ENCODE measurements at regions of chr10 and their contacts with region 1.

Region 1: DNA sequence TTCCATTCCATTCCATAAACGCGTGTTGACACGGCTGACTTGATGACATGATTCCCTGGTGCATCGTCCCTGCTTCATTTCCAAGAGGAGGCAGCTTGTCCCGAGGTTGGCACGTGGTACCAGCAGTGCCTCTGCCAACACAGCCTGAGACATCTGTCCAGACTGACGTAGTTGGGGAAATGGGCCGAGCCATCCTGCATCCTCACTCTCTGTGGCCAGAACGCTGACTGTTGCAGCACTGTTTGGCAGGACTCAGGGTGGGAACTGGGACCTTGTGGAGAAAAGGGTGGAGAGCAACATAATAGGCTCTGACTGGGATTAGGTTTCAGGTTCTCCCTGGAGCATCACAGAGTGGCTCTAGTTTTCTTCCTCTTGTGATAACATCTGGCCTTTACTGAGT is 118.6 kb upstream of the BTBD16 start:
- DNase-seq: peak; percentile 97 to 99
- ATAC-seq: peak; percentile 87 to 90
- H3K4me3 ChIP-seq: no peak overlapping the region
- H3K27ac ChIP-seq: peak overlapping the region; percentile 84 to 98 (median 96)
- H3K4me1 ChIP-seq: peaks cover 66 to 81% of the 10 kb centered on the region in 2 donors
- H3K27me3 ChIP-seq: no peaks in the 10 kb centered on the region
- CTCF ChIP-seq: peak in 1 of 5 experiments; percentile 24
- POLR2A ChIP-seq: peak; percentile 9 to 62

Region 2: GRCh38 chr10:122199070-122199469 is 46.5 kb after region 1 on chr10:
- in situ Hi-C with region 1: no loop called
- intact Hi-C with region 1: loop called (anchors 2 kb)
- DNase-seq: peak; percentile 66 to 73
- ATAC-seq: peak; percentile 87 to 89
- H3K4me3 ChIP-seq: no peak overlapping the region
- H3K27ac ChIP-seq: peak overlapping the region; percentile 75 to 95 (median 82)
- H3K4me1 ChIP-seq: peaks cover 19 to 23% of the 10 kb centered on the region in 2 donors
- H3K27me3 ChIP-seq: no peaks in the 10 kb centered on the region
- CTCF ChIP-seq: no peak
- POLR2A ChIP-seq: no peak

Region 3: GRCh38 chr10:122232769-122233168 is 80.2 kb after region 1 on chr10:
- in situ Hi-C with region 1: no loop called
- intact Hi-C with region 1: loop called (anchors 2 kb)
- DNase-seq: no peak
- ATAC-seq: peak in 1 of 2 donors; percentile 21
- H3K4me3 ChIP-seq: no peak overlapping the region
- H3K27ac ChIP-seq: peak overlapping the region; percentile 83 to 95 (median 86)
- H3K4me1 ChIP-seq: peaks cover 34% of the 10 kb centered on the region in 2 donors
- H3K27me3 ChIP-seq: no peaks in the 10 kb centered on the region
- CTCF ChIP-seq: no peak
- POLR2A ChIP-seq: no peak

Region 4: GRCh38 chr10:122515588-122516231 is 363.2 kb after region 1 on chr10:
- in situ Hi-C with region 1: no loop called
- intact Hi-C with region 1: no loop called
- DNase-seq: peak in 1 of 2 donors; percentile 19
- ATAC-seq: peak; percentile 23 to 29
- H3K4me3 ChIP-seq: no peak overlapping the region
- H3K27ac ChIP-seq: peak overlapping the region; percentile 13 to 63 (median 28)
- H3K4me1 ChIP-seq: no peaks in the 10 kb centered on the region
- H3K27me3 ChIP-seq: no peaks in the 10 kb centered on the region
- CTCF ChIP-seq: no peak
- POLR2A ChIP-seq: no peak

Region 5: GRCh38 chr10:122829454-122829853 is 676.9 kb after region 1 on chr10:
- in situ Hi-C with region 1: no loop called
- intact Hi-C with region 1: no loop called
- DNase-seq: no peak
- ATAC-seq: no peak
- H3K4me3 ChIP-seq: no peak overlapping the region
- H3K27ac ChIP-seq: no peak overlapping the region
- H3K4me1 ChIP-seq: no peaks in the 10 kb centered on the region
- H3K27me3 ChIP-seq: no peaks in the 10 kb centered on the region
- CTCF ChIP-seq: no peak
- POLR2A ChIP-seq: no peak

Measured in gastrocnemius medialis (tissue), 4 donors.